H1 (cell line): ENCODE measurements at regions of chr14 and their contacts with region 1.

Region 1: GRCh38 chr14:65958664-65959562 is 527.3 kb upstream of the CCDC196 start:
- DNase-seq: peak in 1 of 2 experiments; percentile 50
- H3K4me3 ChIP-seq: no peak overlapping the region
- H3K27ac ChIP-seq: no peak overlapping the region
- H3K4me1 ChIP-seq: peaks cover 3 to 13% (median 9%) of the 10 kb centered on the region in 4 experiments
- H3K27me3 ChIP-seq: no peaks in the 10 kb centered on the region
- CTCF ChIP-seq: peak in 2 of 3 experiments; percentile 45 to 58; a peak in 2 of 4 replicates
- EP300 ChIP-seq: no peak
- POLR2A ChIP-seq: no peak
- RAD21 ChIP-seq: peak; percentile 61 to 72

Region 2: GRCh38 chr14:65412032-65412846 is 546.7 kb before region 1 on chr14 and contains the start of gene FUT8:
- CTCF ChIA-PET with region 1: interaction called, 50 read pairs
- POLR2A ChIA-PET with region 1: interaction called, 3 read pairs
- DNase-seq: peak; percentile 93 to 96
- H3K4me3 ChIP-seq: peak within 1 kb of the TSS; percentile 71 to 85 (median 77)
- H3K27ac ChIP-seq: peak within 1 kb of the TSS; percentile 73
- H3K4me1 ChIP-seq: peaks cover 0 to 5% (median 0%) of the 10 kb centered on the region in 4 experiments; a peak in 1 of 7 replicates
- H3K27me3 ChIP-seq: no peaks in the 10 kb centered on the region; a peak in 1 of 7 replicates
- CTCF ChIP-seq: peak; percentile 64 to 78 (median 67)
- EP300 ChIP-seq: peak; percentile 5 to 73; a peak in 2 of 3 replicates
- POLR2A ChIP-seq: peak in 1 of 2 experiments; percentile 76; a peak in 2 of 3 replicates
- RAD21 ChIP-seq: peak; percentile 79 to 85
- total RNA-seq, gene FUT8: 25.1 and 25.3 TPM in 2 replicates

Region 3: GRCh38 chr14:65824285-65824977 is 134.5 kb before region 1 on chr14:
- CTCF ChIA-PET with region 1: interaction called, 19 read pairs
- POLR2A ChIA-PET with region 1: no interaction called
- DNase-seq: no peak
- H3K4me3 ChIP-seq: no peak overlapping the region
- H3K27ac ChIP-seq: no peak overlapping the region
- H3K4me1 ChIP-seq: peaks cover 0 to 15% (median 8%) of the 10 kb centered on the region in 4 experiments; a peak in 6 of 7 replicates
- H3K27me3 ChIP-seq: no peaks in the 10 kb centered on the region; a peak in 1 of 7 replicates
- CTCF ChIP-seq: peak; percentile 38 to 89 (median 74)
- EP300 ChIP-seq: no peak
- POLR2A ChIP-seq: no peak
- RAD21 ChIP-seq: peak; percentile 79 to 86

Region 4: GRCh38 chr14:65940056-65940733 is 18.7 kb before region 1 on chr14:
- CTCF ChIA-PET with region 1: interaction called, 30 read pairs
- POLR2A ChIA-PET with region 1: no interaction called
- DNase-seq: no peak
- H3K4me3 ChIP-seq: no peak overlapping the region
- H3K27ac ChIP-seq: no peak overlapping the region
- H3K4me1 ChIP-seq: peaks cover 0 to 14% (median 5%) of the 10 kb centered on the region in 4 experiments; a peak in 5 of 7 replicates
- H3K27me3 ChIP-seq: no peaks in the 10 kb centered on the region
- CTCF ChIP-seq: no peak
- EP300 ChIP-seq: no peak
- POLR2A ChIP-seq: no peak
- RAD21 ChIP-seq: no peak

Region 5: DNA sequence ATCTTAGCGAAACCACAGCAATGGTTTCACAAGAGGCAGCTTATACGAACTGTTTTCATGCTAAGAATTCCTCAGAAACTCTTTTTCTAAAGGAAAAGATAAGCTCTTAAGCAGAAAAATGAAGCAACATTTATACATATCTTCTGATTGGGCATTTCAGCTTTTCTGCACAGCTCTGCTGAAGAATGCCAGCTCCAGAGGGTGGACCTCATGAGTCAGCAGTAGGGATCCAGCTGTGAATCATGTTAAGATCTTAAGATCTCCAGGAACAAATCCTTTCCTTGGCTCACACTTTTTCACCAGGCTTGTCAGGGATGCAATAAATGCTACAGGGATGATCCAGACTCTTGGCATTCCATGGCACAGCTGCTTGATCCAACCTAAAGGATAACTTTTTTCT is 50.2 kb after region 1 on chr14:
- CTCF ChIA-PET with region 1: interaction called, 13 read pairs
- POLR2A ChIA-PET with region 1: no interaction called
- DNase-seq: no peak
- H3K4me3 ChIP-seq: no peak overlapping the region
- H3K27ac ChIP-seq: no peak overlapping the region
- H3K4me1 ChIP-seq: peaks cover 0 to 13% (median 4%) of the 10 kb centered on the region in 4 experiments; a peak in 5 of 7 replicates
- H3K27me3 ChIP-seq: no peaks in the 10 kb centered on the region
- CTCF ChIP-seq: no peak
- EP300 ChIP-seq: no peak
- POLR2A ChIP-seq: no peak
- RAD21 ChIP-seq: no peak

Region 6: DNA sequence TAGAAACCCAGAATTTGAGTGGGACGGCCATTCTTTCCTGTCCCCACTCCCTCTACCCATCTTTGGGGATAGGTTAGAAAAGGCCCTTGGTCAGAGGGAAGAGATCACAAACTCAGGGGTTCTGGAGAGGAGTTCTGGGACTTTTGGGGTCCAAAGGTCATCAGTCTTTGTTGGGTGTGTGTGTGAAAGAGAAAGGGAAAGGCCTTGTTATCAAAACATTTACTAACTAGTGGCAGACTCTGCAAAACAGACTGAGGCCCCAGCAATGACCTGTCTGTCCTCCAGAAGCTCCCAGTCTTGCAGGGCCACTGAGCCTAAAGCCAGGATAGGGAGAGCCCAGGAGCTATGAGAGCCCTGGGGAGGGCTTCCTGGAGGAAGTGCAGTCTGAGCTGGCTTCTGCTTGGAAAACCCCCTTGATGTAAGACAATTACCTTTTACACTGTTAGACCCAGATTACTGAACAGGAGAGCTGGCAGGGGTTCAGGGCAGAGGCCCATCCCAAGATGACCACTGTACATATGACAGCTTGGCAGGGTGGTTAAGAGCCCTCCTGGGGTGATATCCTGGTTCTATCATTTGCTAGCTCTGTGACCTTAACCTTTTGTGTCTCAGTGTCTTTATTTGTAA is 98.1 kb after region 1 on chr14:
- CTCF ChIA-PET with region 1: interaction called, 14 read pairs
- POLR2A ChIA-PET with region 1: no interaction called
- DNase-seq: no peak
- H3K4me3 ChIP-seq: no peak overlapping the region
- H3K27ac ChIP-seq: no peak overlapping the region
- H3K4me1 ChIP-seq: no peaks in the 10 kb centered on the region
- H3K27me3 ChIP-seq: no peaks in the 10 kb centered on the region
- CTCF ChIP-seq: no peak
- EP300 ChIP-seq: no peak
- POLR2A ChIP-seq: no peak
- RAD21 ChIP-seq: no peak